ENCODE measurements at regions of chr13 and their contacts with region 1.

Region 1: DNA sequence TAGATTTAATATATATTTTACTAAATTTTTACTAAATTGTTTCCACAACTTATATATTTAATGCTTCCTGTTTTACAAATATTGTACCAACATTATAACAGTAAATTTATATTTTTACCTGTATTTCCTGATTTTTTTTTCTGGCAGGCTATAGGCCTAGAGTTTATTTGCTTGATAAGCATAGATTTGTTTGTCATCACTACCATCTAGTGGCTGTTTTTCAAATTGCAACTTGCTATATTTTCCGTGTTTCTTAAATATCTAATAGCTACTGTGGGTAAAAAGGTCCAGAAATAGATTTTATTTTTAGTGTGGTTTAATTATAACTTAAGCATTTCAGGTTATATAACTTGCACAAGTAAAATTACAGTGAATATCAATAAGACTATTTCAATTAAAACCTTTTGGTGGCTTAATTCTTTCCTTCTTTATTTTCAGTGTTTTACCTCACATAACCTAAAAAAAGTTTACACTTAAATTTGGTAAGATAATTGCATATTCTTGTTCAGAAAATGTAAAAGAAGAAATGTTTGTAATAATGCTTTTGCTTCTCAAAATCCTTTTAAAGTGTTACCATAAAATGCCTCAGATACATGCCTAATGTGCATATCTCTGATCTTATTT is 60.6 kb downstream of the NDFIP2 start:
- DNase-seq: peak in 1 of 3 donors; percentile 42
- ATAC-seq: peak; percentile 63
- H3K4me3 ChIP-seq: no peak overlapping the region
- H3K4me1 ChIP-seq: no peaks in the 10 kb centered on the region
- CTCF ChIP-seq: peak; percentile 62

Region 2: GRCh38 chr13:79423801-79424642 is 117.5 kb before region 1 on chr13:
- intact Hi-C with region 1: loop called in 1 of 2 experiments (anchors 5 kb)
- DNase-seq: no peak
- ATAC-seq: peak; percentile 69
- H3K4me3 ChIP-seq: no peak overlapping the region
- H3K4me1 ChIP-seq: no peaks in the 10 kb centered on the region
- CTCF ChIP-seq: peak; percentile 49

Measured in mucosa of descending colon (tissue), 3 donors.